CD8-positive, alpha-beta T cell (primary cell): ENCODE measurements at regions of chr2 and their contacts with region 1.

Region 1: DNA sequence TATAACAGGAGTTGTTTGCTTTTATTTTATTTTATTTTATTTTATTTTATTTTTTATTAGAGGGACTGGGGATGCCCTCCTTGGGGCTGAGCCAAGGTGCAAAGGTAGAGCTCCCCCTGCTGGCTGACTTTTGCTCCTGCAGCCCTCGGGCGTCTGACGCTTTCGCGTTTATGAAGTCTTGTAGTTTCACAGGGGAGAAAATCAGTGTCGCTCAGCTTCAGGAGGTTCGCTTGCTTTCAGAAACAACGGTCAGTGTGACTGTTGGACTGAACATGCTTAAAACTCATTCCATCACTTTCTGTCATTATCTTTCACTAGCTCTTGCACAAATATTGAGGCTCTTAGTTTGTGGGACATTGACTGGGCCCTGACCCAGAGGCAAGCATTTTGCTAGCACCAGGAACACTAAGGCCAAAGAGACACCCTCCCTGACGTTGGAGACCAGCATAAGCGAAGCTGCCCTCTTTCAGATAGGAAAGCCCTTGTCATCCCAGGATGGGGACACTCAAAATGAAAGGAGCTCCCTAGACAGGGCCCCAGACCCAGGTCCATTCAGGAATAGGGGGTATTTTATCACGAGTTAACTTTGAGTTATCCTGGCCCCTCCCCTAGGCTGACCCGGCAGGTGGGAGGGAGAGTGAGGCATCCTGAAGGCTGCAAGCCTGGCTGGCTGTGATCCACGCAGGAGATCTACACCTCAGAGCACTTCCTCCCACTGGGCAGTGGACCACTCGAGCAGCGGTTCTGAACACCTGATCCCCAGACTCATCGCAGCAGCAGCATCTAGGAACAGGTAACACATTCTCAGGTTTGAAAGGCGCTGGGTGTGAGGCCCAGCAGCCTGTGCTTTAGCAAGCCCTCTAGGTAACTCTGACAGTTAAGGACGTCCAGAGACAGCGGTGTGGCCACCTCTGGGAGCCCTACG is 34.4 kb downstream of the LGALSL start:
- DNase-seq: peak; percentile 56 to 87 (median 79)
- ATAC-seq: peak; percentile 82
- H3K4me3 ChIP-seq: no peak overlapping the region
- H3K4me3 Mint-ChIP-seq: no peak overlapping the region
- H3K27ac ChIP-seq: no peak overlapping the region
- H3K27ac Mint-ChIP-seq: no peak overlapping the region
- H3K4me1 ChIP-seq: no peaks in the 10 kb centered on the region
- H3K4me1 Mint-ChIP-seq: peaks cover 11% of the 10 kb centered on the region
- H3K27me3 ChIP-seq: no peaks in the 10 kb centered on the region
- H3K27me3 Mint-ChIP-seq: peaks cover 6% of the 10 kb centered on the region
- CTCF ChIP-seq: peak; percentile 97

Region 2: DNA sequence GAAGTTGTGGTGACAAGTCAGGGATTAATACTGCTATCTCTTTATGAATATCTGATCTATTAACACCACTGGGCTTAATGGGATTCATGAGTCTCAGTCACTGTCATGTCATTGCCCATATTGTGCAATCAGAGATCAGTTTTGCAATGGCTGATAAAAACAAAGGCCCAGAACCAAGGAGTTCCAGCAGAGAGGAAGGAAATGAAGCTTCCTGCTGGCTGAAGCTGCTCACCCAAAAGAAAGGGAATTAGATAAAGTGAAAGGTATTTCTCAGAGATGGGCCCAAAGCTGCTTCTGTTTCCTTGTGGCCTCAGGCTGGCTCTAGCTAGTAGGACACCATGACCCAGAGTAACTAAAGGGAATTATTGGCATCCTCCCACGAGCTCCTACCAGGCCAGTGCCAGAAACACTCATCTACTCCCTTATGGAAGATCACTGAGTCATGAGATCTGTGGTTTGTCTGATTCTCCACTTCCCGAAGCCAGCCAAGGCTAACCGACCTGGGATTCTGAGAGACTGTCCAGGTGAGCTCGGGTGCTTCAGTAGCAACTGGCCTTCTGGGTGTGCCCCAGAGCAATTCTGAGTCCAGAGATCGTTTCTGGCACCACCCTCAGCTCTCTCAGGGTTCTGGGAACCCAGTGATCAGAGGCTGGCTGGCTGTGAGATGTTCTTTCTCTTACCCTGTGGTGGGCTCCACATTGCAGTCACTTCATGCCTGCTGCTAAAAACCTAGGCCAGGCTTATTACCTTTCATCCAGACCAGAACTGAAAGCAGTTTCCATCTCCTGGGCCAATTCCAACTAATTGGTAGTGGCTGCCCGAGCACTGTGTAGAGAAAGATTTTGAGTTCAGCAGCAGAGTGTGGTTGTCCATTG is 214.6 kb before region 1 on chr2:
- CTCF ChIA-PET with region 1: no interaction called
- POLR2A ChIA-PET with region 1: no interaction called
- intact Hi-C with region 1: no loop called
- DNase-seq: no peak
- ATAC-seq: no peak
- H3K4me3 ChIP-seq: no peak overlapping the region
- H3K4me3 Mint-ChIP-seq: no peak overlapping the region
- H3K27ac ChIP-seq: no peak overlapping the region
- H3K27ac Mint-ChIP-seq: peak overlapping the region; percentile 6
- H3K4me1 ChIP-seq: peaks cover 8% of the 10 kb centered on the region
- H3K4me1 Mint-ChIP-seq: peaks cover 18% of the 10 kb centered on the region
- H3K27me3 ChIP-seq: no peaks in the 10 kb centered on the region
- H3K27me3 Mint-ChIP-seq: no peaks in the 10 kb centered on the region
- CTCF ChIP-seq: no peak

Region 3: DNA sequence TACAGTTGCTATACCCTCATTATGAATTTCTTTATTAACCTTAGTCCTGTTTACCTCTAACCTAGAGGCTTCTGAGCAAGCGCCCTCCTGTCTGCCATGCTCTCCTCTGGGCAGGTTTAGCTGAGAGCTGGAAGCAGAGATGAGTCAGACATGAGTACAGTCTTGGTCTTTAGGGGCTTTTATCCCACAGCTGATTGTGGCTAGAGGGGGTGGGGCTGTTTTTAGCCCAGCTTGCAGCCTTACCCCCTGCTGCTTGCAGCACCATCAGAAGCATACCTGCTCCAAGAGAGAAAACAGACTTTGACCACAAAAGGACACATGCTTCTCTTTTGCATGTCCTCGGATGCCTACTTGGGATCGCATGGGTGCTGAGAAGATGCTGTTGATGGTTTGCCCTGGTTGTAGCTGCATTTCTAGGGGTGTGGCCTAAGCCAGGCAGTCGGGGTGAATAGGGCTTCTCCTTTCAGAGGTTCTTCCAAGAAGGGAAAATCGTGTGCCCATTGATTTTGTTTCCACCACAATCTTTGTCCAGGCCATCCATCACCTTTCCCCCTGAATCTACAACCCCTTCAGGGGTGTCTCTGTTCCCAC is 149.3 kb before region 1 on chr2:
- CTCF ChIA-PET with region 1: interaction called, 15 read pairs
- POLR2A ChIA-PET with region 1: no interaction called
- intact Hi-C with region 1: no loop called
- DNase-seq: peak in 8 of 9 experiments; percentile 24 to 76 (median 53)
- ATAC-seq: peak; percentile 94
- H3K4me3 ChIP-seq: no peak overlapping the region
- H3K4me3 Mint-ChIP-seq: no peak overlapping the region
- H3K27ac ChIP-seq: no peak overlapping the region
- H3K27ac Mint-ChIP-seq: no peak overlapping the region
- H3K4me1 ChIP-seq: peaks cover 8% of the 10 kb centered on the region
- H3K4me1 Mint-ChIP-seq: peaks cover 8% of the 10 kb centered on the region
- H3K27me3 ChIP-seq: no peaks in the 10 kb centered on the region
- H3K27me3 Mint-ChIP-seq: no peaks in the 10 kb centered on the region
- CTCF ChIP-seq: no peak

Region 4: GRCh38 chr2:64467096-64467843 is 21.0 kb before region 1 on chr2:
- CTCF ChIA-PET with region 1: interaction called, 15 read pairs
- POLR2A ChIA-PET with region 1: no interaction called
- intact Hi-C with region 1: no loop called
- DNase-seq: no peak
- ATAC-seq: no peak
- H3K4me3 ChIP-seq: no peak overlapping the region
- H3K4me3 Mint-ChIP-seq: no peak overlapping the region
- H3K27ac ChIP-seq: no peak overlapping the region
- H3K27ac Mint-ChIP-seq: no peak overlapping the region
- H3K4me1 ChIP-seq: no peaks in the 10 kb centered on the region
- H3K4me1 Mint-ChIP-seq: no peaks in the 10 kb centered on the region
- H3K27me3 ChIP-seq: no peaks in the 10 kb centered on the region
- H3K27me3 Mint-ChIP-seq: no peaks in the 10 kb centered on the region
- CTCF ChIP-seq: no peak

Region 5: DNA sequence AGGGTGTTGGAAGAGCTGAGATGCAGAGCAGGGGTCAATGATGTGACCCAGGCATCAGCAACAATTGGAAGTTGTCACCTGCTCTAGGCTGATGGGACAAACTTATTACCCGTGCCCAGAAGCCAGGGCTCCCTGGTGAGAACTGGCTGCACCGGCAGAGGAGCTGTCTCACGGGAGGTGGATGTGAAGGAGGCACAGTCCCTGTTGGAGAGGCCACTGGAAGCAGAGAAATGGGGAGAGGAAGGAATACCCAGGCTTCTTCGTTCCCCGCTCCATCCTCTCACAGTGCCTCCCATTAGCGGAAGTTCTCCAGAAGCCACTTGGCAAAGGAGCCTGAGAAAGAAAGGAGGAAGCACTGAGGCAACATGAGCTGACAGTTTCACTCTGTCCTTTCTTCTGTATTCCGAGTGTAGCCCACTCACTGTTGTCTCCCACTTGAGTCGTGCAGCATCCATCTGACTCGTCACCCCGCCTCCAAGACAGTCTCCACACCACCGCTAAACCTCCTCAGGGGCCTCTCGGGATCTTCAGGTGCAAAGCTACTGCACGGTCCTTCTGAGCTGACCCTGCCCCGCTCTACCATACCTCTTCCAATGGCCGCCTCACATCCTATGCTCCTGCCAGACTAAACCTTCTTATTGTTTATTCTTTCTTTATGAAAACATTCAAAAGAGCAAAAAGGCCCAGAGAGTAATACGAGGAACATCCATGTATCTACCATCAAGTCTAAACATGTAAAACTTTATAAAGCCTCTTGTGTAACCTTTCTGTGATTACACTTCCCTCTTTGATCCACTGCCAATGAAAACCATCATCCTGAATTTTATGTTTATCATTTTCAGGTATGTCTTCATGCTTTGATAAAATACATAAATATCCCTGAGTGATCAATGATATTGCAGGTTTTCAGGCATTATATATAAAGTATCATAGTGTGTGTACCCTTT is 16.7 kb after region 1 on chr2:
- CTCF ChIA-PET with region 1: interaction called, 39 read pairs
- POLR2A ChIA-PET with region 1: no interaction called
- intact Hi-C with region 1: no loop called
- DNase-seq: no peak
- ATAC-seq: no peak
- H3K4me3 ChIP-seq: no peak overlapping the region
- H3K4me3 Mint-ChIP-seq: no peak overlapping the region
- H3K27ac ChIP-seq: no peak overlapping the region
- H3K27ac Mint-ChIP-seq: no peak overlapping the region
- H3K4me1 ChIP-seq: no peaks in the 10 kb centered on the region
- H3K4me1 Mint-ChIP-seq: no peaks in the 10 kb centered on the region
- H3K27me3 ChIP-seq: no peaks in the 10 kb centered on the region
- H3K27me3 Mint-ChIP-seq: peaks cover 5% of the 10 kb centered on the region
- CTCF ChIP-seq: no peak

Region 6: GRCh38 chr2:64562148-64562784 is 74.0 kb after region 1 on chr2:
- CTCF ChIA-PET with region 1: interaction called, 6 read pairs
- POLR2A ChIA-PET with region 1: no interaction called
- intact Hi-C with region 1: loop called in 1 of 2 experiments (anchors 2 kb)
- DNase-seq: peak in 2 of 9 experiments; percentile 46 to 61
- ATAC-seq: peak; percentile 78
- H3K4me3 ChIP-seq: no peak overlapping the region
- H3K4me3 Mint-ChIP-seq: no peak overlapping the region
- H3K27ac ChIP-seq: no peak overlapping the region
- H3K27ac Mint-ChIP-seq: no peak overlapping the region
- H3K4me1 ChIP-seq: peaks cover 14% of the 10 kb centered on the region
- H3K4me1 Mint-ChIP-seq: peaks cover 30% of the 10 kb centered on the region
- H3K27me3 ChIP-seq: no peaks in the 10 kb centered on the region
- H3K27me3 Mint-ChIP-seq: no peaks in the 10 kb centered on the region
- CTCF ChIP-seq: peak; percentile 58